ENCODE measurements at regions of chrX and their contacts with region 1.

Region 1: GRCh38 chrX:124346117-124346876 is at the start of gene SH2D1A:
- DNase-seq: peak; percentile 51
- H3K4me3 Mint-ChIP-seq: peak within 1 kb of the TSS; percentile 94
- H3K27ac Mint-ChIP-seq: peak within 1 kb of the TSS; percentile 98
- H3K4me1 Mint-ChIP-seq: peaks cover 53% of the 10 kb centered on the region
- H3K27me3 Mint-ChIP-seq: no peaks in the 10 kb centered on the region
- total RNA-seq, gene SH2D1A: 58.3 to 61.2 TPM

Region 2: GRCh38 chrX:124211312-124211942 is 134.9 kb before region 1 on chrX:
- CTCF ChIA-PET with region 1: interaction called, 7 read pairs
- POLR2A ChIA-PET with region 1: interaction called, 101 read pairs
- DNase-seq: peak; percentile 24
- H3K4me3 Mint-ChIP-seq: no peak overlapping the region
- H3K27ac Mint-ChIP-seq: no peak overlapping the region
- H3K4me1 Mint-ChIP-seq: peaks cover 44% of the 10 kb centered on the region
- H3K27me3 Mint-ChIP-seq: peaks cover 1% of the 10 kb centered on the region

Region 3: GRCh38 chrX:124217304-124218251 is 128.7 kb before region 1 on chrX:
- CTCF ChIA-PET with region 1: interaction called, 6 read pairs
- POLR2A ChIA-PET with region 1: interaction called, 101 read pairs
- DNase-seq: peak; percentile 74
- H3K4me3 Mint-ChIP-seq: peak overlapping the region; percentile 58
- H3K27ac Mint-ChIP-seq: peak overlapping the region; percentile 97
- H3K4me1 Mint-ChIP-seq: peaks cover 76% of the 10 kb centered on the region
- H3K27me3 Mint-ChIP-seq: no peaks in the 10 kb centered on the region

Region 4: GRCh38 chrX:124358800-124359383 is 12.6 kb after region 1 on chrX:
- CTCF ChIA-PET with region 1: interaction called, 3 read pairs
- POLR2A ChIA-PET with region 1: interaction called, 118 read pairs
- DNase-seq: no peak
- H3K4me3 Mint-ChIP-seq: peak overlapping the region; percentile 74
- H3K27ac Mint-ChIP-seq: peak overlapping the region; percentile 86
- H3K4me1 Mint-ChIP-seq: peaks cover 61% of the 10 kb centered on the region
- H3K27me3 Mint-ChIP-seq: no peaks in the 10 kb centered on the region

Region 5: DNA sequence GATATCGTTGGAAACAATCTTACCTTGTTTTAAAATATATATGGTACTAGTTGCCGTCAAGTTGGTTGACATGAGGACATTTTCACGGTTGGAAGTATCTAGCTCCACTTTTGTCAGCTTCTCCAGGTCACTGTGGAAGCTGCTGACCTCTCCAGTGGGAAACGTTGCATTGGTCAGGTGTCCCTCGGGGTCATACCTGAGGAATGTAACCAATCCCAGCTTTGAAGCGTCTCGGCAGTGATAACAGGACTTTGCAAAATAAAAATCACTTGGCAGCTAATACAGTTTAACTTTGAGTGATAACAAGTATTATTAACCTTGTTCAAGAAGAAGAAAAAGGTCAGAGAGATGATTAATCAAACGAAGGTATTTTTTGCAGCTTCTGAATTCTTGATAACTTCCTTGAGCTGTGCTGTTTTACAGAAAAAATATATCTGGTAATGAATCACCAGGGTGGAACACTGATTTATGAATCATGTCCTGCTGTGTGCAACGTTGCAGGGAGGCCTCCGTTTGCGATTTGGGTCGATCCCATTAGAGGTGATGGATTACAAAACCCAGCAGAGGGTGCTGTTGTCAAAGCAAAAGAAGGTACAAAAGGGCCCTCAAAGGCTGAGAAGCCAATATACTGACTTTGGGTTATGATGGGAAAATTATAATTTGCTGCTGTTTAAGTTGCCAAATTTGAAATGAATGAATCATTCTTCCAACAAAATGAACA is 60.2 kb after region 1 on chrX:
- CTCF ChIA-PET with region 1: no interaction called
- POLR2A ChIA-PET with region 1: no interaction called
- DNase-seq: peak; percentile 65
- H3K4me3 Mint-ChIP-seq: no peak overlapping the region
- H3K27ac Mint-ChIP-seq: no peak overlapping the region
- H3K4me1 Mint-ChIP-seq: peaks cover 5% of the 10 kb centered on the region
- H3K27me3 Mint-ChIP-seq: no peaks in the 10 kb centered on the region

Measured in activated CD4-positive, alpha-beta memory T cell treated with anti-CD3 and anti-CD28 coated beads, Interleukin-2, amount 10 ng/mL, durations not matched to agents 7 days and 5 days (primary cell).